ENCODE measurements at regions of chr2 and their contacts with region 1.

Region 1: DNA sequence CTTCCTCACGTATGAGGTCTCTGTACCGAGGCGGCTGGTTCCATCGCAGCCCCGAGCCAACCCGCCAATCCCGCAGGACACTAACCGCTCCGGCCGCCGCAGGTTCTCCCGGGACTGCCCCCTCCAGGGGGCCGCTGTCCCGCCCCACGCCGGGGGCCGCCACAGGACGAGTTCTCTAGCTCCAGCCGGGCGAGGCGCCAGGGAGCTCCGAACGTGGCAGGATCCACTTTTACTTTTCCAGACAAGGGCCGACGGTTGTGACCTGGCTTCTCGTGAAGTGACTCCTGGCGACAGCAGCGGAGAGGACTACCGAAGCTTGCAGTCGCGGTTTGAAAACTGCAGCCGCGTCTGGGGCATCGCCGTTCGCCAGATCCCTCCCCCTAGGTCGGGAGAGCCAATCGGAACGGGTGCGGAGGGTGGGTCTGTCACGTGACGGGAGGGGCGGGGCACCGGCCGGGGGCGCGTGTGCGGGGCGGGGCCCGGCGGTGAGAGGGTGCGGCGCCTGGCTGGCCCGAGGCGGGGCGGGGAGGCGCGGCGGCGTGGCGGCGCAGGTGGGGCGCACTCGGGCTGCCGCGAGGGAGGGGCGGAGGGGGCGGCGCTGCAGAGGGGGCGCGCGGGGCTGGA is at the start of gene STK17B:
- DNase-seq: peak; percentile 93
- H3K4me3 Mint-ChIP-seq: peak within 1 kb of the TSS; percentile 94
- H3K27ac Mint-ChIP-seq: peak within 1 kb of the TSS; percentile 92
- H3K4me1 Mint-ChIP-seq: peaks cover 50% of the 10 kb centered on the region
- H3K27me3 Mint-ChIP-seq: no peaks in the 10 kb centered on the region
- total RNA-seq, gene STK17B: 148 and 164 TPM in 2 replicates

Region 2: GRCh38 chr2:196068271-196069209 is 102.8 kb before region 1 on chr2 and contains the start of gene DNAH7:
- intact Hi-C with region 1: loop called (anchors 2 kb)
- DNase-seq: peak; percentile 88
- H3K4me3 Mint-ChIP-seq: peak within 1 kb of the TSS; percentile 87
- H3K27ac Mint-ChIP-seq: peak within 1 kb of the TSS; percentile 89
- H3K4me1 Mint-ChIP-seq: peaks cover 15% of the 10 kb centered on the region
- H3K27me3 Mint-ChIP-seq: peaks cover 32% of the 10 kb centered on the region
- total RNA-seq, gene DNAH7: not detected in 2 replicates

Region 3: GRCh38 chr2:196160101-196160500 is 11.3 kb before region 1 on chr2:
- intact Hi-C with region 1: loop called (anchors 1 kb)
- DNase-seq: peak; percentile 74
- H3K4me3 Mint-ChIP-seq: peak overlapping the region; percentile 76
- H3K27ac Mint-ChIP-seq: peak overlapping the region; percentile 93
- H3K4me1 Mint-ChIP-seq: peaks cover 91% of the 10 kb centered on the region
- H3K27me3 Mint-ChIP-seq: no peaks in the 10 kb centered on the region

Region 4: GRCh38 chr2:196187898-196188458 is 16.6 kb after region 1 on chr2:
- intact Hi-C with region 1: no loop called
- DNase-seq: no peak
- H3K4me3 Mint-ChIP-seq: no peak overlapping the region
- H3K27ac Mint-ChIP-seq: no peak overlapping the region
- H3K4me1 Mint-ChIP-seq: peaks cover 50% of the 10 kb centered on the region
- H3K27me3 Mint-ChIP-seq: no peaks in the 10 kb centered on the region

Region 5: GRCh38 chr2:196233805-196234475 is 62.6 kb after region 1 on chr2:
- intact Hi-C with region 1: loop called (anchors 1 kb)
- DNase-seq: no peak
- H3K4me3 Mint-ChIP-seq: peak overlapping the region; percentile 35
- H3K27ac Mint-ChIP-seq: peak overlapping the region; percentile 83
- H3K4me1 Mint-ChIP-seq: peaks cover 93% of the 10 kb centered on the region
- H3K27me3 Mint-ChIP-seq: no peaks in the 10 kb centered on the region

Region 6: GRCh38 chr2:196277002-196277401 is 105.6 kb after region 1 on chr2:
- intact Hi-C with region 1: loop called (anchors 1 kb)
- DNase-seq: no peak
- H3K4me3 Mint-ChIP-seq: no peak overlapping the region
- H3K27ac Mint-ChIP-seq: no peak overlapping the region
- H3K4me1 Mint-ChIP-seq: peaks cover 44% of the 10 kb centered on the region
- H3K27me3 Mint-ChIP-seq: no peaks in the 10 kb centered on the region

Measured in activated T-helper 1 cell treated with anti-CD3 and anti-CD28 coated beads, Interleukin-12 subunit alpha, Interleukin-12 subunit beta, Interleukin-2, Interleukin-4 antibody, amounts not matched to agents 30 ng/mL and 10 ng/mL and 1 ng/mL, durations not matched to agents 14 hours and 24 hours and 36 hours (primary cell).